ENCODE measurements at regions of chr19 and their contacts with region 1.

Region 1: GRCh38 chr19:13794757-13795589 is at the start of gene ZSWIM4:
- DNase-seq: peak; percentile 99
- ATAC-seq: peak; percentile 99
- H3K4me3 Mint-ChIP-seq: peak within 1 kb of the TSS; percentile 100
- H3K27ac Mint-ChIP-seq: peak within 1 kb of the TSS; percentile 93
- H3K4me1 Mint-ChIP-seq: peaks cover 36% of the 10 kb centered on the region
- H3K27me3 Mint-ChIP-seq: no peaks in the 10 kb centered on the region
- total RNA-seq, gene ZSWIM4: 8.4 to 9.5 TPM

Region 2: GRCh38 chr19:13833330-13834243 is 38.6 kb after region 1 on chr19:
- CTCF ChIA-PET with region 1: interaction called, 8 read pairs
- POLR2A ChIA-PET with region 1: interaction called, 25 read pairs
- DNase-seq: peak; percentile 93
- ATAC-seq: peak; percentile 64
- H3K4me3 Mint-ChIP-seq: peak overlapping the region; percentile 68
- H3K27ac Mint-ChIP-seq: peak overlapping the region; percentile 81
- H3K4me1 Mint-ChIP-seq: peaks cover 51% of the 10 kb centered on the region
- H3K27me3 Mint-ChIP-seq: no peaks in the 10 kb centered on the region

Region 3: GRCh38 chr19:13839130-13839937 is 44.4 kb after region 1 on chr19:
- CTCF ChIA-PET with region 1: interaction called, 8 read pairs
- POLR2A ChIA-PET with region 1: interaction called, 25 read pairs
- DNase-seq: peak; percentile 90
- ATAC-seq: peak; percentile 22
- H3K4me3 Mint-ChIP-seq: peak overlapping the region; percentile 89
- H3K27ac Mint-ChIP-seq: peak overlapping the region; percentile 92
- H3K4me1 Mint-ChIP-seq: peaks cover 52% of the 10 kb centered on the region
- H3K27me3 Mint-ChIP-seq: no peaks in the 10 kb centered on the region

Region 4: DNA sequence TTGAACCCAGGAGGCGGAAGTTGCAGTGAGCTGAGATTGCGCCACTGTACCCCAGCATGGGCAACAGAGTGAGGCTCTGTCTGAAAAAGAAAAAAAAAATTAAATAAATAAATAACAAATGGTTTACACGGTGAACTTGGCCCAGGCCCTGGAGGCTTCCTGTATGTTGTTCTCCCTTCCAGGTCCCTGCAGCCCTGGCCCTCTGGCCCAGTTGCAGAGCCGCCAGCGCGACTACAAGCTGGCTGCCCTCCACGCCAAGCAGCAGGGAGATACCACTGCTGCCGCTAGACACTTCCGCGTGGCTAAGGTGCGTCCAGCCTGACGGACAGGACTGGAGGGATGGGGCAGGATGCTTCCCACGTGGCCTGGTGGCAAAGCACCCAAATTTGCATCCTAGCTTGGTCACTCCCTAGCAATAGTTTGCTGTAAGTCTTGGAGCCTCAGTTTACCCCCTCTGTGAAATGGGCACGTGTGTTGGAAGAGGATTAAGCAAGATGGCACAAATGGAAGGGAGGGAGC is 123.0 kb after region 1 on chr19:
- CTCF ChIA-PET with region 1: no interaction called
- POLR2A ChIA-PET with region 1: no interaction called
- DNase-seq: no peak
- ATAC-seq: no peak
- H3K4me3 Mint-ChIP-seq: no peak overlapping the region
- H3K27ac Mint-ChIP-seq: no peak overlapping the region
- H3K4me1 Mint-ChIP-seq: peaks cover 4% of the 10 kb centered on the region
- H3K27me3 Mint-ChIP-seq: no peaks in the 10 kb centered on the region

Measured in activated CD8-positive, alpha-beta T cell treated with anti-CD3 and anti-CD28 coated beads, Interleukin-2, amount 10 ng/mL, durations not matched to agents 7 days and 5 days (primary cell).